RWPE1 (cell line): ENCODE measurements at regions of chr11 and their contacts with region 1.

Region 1: GRCh38 chr11:46308631-46309419 is 31.4 kb downstream of the CREB3L1 start:
- DNase-seq: peak; percentile 74
- H3K27ac ChIP-seq: no peak overlapping the region
- CTCF ChIP-seq: peak; percentile 89

Region 2: DNA sequence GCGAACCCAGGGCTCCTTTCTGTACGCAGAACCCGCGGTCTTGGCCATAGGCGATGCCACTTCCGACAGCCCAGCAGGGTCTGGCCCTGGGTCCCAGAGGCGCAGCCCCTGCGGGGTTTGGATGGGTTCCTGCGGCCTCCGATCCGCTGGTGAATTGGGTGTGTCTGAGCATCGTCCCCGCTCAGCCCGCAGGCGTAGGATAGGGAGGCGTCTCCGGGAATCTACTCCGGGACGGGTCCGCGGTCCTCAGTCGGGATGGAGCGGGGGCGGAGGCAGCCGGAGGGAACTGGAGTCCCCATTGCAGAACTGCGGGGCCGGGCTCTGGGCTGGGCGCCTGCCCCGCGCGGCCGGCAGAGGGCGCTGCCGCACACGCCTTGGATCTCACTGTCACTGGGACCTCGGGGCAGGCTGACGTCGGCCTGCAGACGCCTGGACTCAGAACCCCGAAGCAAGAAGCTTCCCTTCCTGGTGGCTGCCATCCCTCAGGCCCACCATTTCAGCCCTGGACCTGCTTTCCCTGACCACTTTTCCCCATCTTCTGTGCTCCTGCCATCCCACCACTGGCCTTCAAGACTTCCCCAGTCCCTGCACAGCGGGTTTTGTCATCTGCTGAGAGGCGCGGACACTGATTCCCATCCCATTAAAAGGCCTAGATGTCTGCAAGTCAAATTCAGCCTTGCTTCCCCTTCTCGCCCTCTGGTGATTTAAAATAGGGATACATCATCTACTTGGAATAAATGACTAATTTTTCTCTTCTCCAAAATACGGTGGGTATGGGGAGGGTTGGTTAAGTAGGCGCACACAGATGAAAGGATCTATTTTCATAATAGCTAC is 69.6 kb before region 1 on chr11:
- CTCF ChIA-PET with region 1: interaction called, 35 read pairs
- POLR2A ChIA-PET with region 1: interaction called, 4 read pairs
- DNase-seq: peak; percentile 83
- H3K27ac ChIP-seq: peak overlapping the region; percentile 98
- CTCF ChIP-seq: peak; percentile 97

Region 3: DNA sequence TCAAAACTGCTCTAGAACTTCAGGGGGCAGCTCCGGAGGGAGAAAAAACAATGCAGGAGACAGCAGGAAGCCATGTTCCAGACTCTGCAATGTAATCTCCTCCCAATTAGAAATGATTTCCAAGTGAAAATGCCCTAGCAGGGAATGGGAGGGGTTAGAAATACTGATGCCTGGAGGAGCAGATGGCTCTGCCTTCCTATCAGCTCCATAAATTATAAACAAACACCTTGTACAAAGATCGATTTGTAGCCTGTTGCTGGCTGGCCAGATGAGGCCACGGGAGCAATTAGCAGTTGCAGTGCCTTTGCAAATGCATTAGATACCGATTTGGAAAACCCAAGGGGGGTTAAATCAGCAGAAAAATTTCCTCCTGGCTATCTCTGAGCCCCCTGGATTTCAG is 129.4 kb after region 1 on chr11:
- CTCF ChIA-PET with region 1: no interaction called
- POLR2A ChIA-PET with region 1: no interaction called
- DNase-seq: no peak
- H3K27ac ChIP-seq: no peak overlapping the region
- CTCF ChIP-seq: no peak